Activated T-helper 1 cell treated with anti-CD3 and anti-CD28 coated beads, Interleukin-12 subunit alpha, Interleukin-12 subunit beta, Interleukin-2, Interleukin-4 antibody, amounts not matched to agents 30 ng/mL and 10 ng/mL and 1 ng/mL, durations not matched to agents 14 hours and 24 hours and 36 hours (primary cell): ENCODE measurements at regions of chr9 and their contacts with region 1.

Region 1: DNA sequence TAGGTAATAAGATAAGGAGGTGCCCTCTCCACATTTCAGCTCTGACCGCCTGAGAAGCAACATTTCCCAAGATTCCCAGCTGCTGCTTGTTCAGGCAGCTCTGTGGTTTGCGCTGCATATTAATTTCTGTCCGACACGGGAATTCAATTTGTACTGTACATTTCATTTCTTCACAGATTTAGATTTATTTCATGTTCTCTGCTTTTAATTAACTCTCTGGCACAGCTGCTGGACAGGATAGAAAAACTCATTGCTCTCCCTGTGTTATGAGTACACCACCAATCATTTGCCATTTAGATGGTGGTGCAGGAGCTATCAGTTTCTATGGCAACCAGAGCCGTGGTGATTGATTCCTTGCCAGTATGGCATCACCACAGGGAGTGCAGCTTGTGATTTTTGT is 558.5 kb downstream of the DMRTA1 start:
- DNase-seq: no peak
- H3K4me3 Mint-ChIP-seq: no peak overlapping the region
- H3K27ac Mint-ChIP-seq: no peak overlapping the region
- H3K4me1 Mint-ChIP-seq: no peaks in the 10 kb centered on the region
- H3K27me3 Mint-ChIP-seq: no peaks in the 10 kb centered on the region

Region 2: DNA sequence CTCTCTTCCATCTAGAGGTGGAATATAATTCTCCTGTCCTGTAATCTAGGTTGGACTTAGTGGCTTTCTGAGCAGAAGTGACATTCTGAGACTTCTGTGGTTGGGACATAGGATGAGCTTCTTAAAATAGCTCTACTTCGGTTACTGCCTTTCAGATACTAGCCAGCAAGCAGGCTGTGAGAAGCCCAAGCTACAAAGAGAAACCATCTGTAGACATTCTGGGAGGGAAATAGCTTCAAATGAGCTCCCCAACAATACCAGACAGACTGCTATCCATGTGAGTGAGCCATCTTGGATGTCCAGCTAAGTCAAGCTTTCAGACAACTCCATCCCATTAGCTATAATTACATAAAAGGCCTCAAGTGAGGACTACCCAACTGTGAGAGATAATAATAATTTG is 10.4 kb after region 1 on chr9:
- intact Hi-C with region 1: loop called (anchors 2 kb)
- DNase-seq: no peak
- H3K4me3 Mint-ChIP-seq: no peak overlapping the region
- H3K27ac Mint-ChIP-seq: no peak overlapping the region
- H3K4me1 Mint-ChIP-seq: no peaks in the 10 kb centered on the region
- H3K27me3 Mint-ChIP-seq: no peaks in the 10 kb centered on the region